Transverse colon (tissue), 4 donors: ENCODE measurements at regions of chr6 and their contacts with region 1.

Region 1: GRCh38 chr6:144248476-144249301 is 36.4 kb upstream of the UTRN start:
- DNase-seq: no peak
- H3K4me3 ChIP-seq: no peak overlapping the region
- H3K27ac ChIP-seq: no peak overlapping the region
- H3K4me1 ChIP-seq: no peaks in the 10 kb centered on the region
- H3K27me3 ChIP-seq: no peaks in the 10 kb centered on the region
- CTCF ChIP-seq: no peak
- EP300 ChIP-seq: no peak
- POLR2A ChIP-seq: no peak

Region 2: GRCh38 chr6:143884216-143884900 is 364.3 kb before region 1 on chr6:
- in situ Hi-C with region 1: no loop called
- intact Hi-C with region 1: loop called (anchors 10 kb)
- DNase-seq: no peak
- H3K4me3 ChIP-seq: no peak overlapping the region
- H3K27ac ChIP-seq: no peak overlapping the region
- H3K4me1 ChIP-seq: no peaks in the 10 kb centered on the region
- H3K27me3 ChIP-seq: no peaks in the 10 kb centered on the region
- CTCF ChIP-seq: no peak
- EP300 ChIP-seq: no peak
- POLR2A ChIP-seq: no peak

Region 3: DNA sequence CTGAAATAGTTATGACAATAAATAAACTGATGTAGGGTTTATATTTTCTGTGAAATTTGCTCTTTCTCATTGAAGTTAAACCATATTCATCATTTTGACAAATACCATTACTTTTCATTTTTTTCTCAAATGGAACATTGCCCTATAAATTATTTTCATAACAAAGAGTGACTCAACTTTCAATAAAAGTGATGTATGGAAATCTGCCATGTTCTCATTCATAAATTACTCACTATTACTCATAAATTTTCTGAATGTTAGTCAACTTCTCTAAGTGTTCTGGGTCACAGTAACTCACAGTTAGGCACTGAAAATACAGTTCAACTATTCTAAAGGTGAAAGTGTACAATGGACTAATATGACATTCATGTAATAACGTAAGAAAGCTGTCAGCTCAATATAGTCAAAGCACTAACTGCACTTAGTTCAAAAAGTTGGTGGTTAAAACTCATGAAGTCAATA is 117.4 kb before region 1 on chr6:
- in situ Hi-C with region 1: no loop called
- intact Hi-C with region 1: no loop called
- DNase-seq: no peak
- H3K4me3 ChIP-seq: no peak overlapping the region
- H3K27ac ChIP-seq: no peak overlapping the region
- H3K4me1 ChIP-seq: no peaks in the 10 kb centered on the region
- H3K27me3 ChIP-seq: no peaks in the 10 kb centered on the region
- CTCF ChIP-seq: no peak
- EP300 ChIP-seq: no peak
- POLR2A ChIP-seq: no peak